ENCODE measurements at regions of chr10 and their contacts with region 1.

Region 1: GRCh38 chr10:8346861-8347260 is 292.4 kb downstream of the GATA3 start:
- DNase-seq: no peak
- ATAC-seq: no peak
- H3K4me3 ChIP-seq: no peak overlapping the region
- H3K4me3 Mint-ChIP-seq: no peak overlapping the region
- H3K27ac ChIP-seq: no peak overlapping the region
- H3K27ac Mint-ChIP-seq: no peak overlapping the region
- H3K4me1 ChIP-seq: no peaks in the 10 kb centered on the region
- H3K4me1 Mint-ChIP-seq: no peaks in the 10 kb centered on the region
- H3K27me3 ChIP-seq: no peaks in the 10 kb centered on the region
- H3K27me3 Mint-ChIP-seq: no peaks in the 10 kb centered on the region

Region 2: DNA sequence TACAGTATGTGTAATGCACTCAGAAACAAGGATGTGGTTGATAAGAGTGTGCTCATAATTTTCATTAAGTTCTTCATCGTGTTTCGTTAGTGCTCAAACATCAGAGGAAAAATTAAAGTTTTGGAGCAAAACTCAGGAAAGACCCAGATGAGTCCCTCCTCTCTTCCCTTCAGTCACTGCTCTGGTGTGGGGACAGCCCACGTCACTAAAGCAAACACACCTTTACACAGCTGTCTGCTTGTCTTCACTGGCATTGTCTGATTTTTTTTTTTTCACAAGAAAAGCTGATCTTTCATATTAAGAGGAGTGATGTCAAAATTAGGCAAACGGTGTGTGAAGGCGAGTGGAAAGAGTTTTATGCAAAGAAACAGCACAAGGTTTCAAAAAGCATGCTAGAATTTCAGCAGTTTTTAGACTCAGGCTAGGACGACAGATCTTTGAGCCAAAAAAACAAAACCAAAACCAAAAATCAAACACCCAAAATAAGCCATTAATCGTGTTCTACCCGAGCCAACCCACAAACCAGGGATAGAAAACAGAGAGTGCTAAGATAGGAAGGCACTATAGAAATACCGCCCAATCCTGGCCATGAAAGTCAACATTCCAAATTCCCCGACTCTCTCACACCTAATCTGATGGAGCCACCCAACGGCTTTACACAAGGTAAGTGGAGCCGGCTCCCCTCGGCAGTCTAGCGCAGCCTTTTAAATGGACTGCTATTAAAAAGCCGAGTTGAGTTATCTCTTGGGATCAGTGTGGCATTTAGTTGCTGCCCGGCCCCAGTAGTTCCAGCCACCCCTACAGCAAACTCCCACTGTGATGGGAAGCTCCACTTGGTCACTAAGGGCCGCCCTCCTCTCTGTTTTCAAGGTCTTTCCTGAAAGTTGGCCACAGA is 320.3 kb before region 1 on chr10:
- CTCF ChIA-PET with region 1: no interaction called
- POLR2A ChIA-PET with region 1: interaction called in 1 of 2 experiments, 17 read pairs
- DNase-seq: peak in 1 of 35 experiments; percentile 11
- ATAC-seq: peak in 1 of 4 experiments; percentile 56
- H3K4me3 ChIP-seq: peak overlapping the region in 1 of 2 donors; percentile 25
- H3K4me3 Mint-ChIP-seq: peak overlapping the region; percentile 64 to 82 (median 69)
- H3K27ac ChIP-seq: no peak overlapping the region
- H3K27ac Mint-ChIP-seq: no peak overlapping the region
- H3K4me1 ChIP-seq: peaks cover 0 to 2% of the 10 kb centered on the region in 2 experiments
- H3K4me1 Mint-ChIP-seq: peaks cover 4 to 6% (median 5%) of the 10 kb centered on the region in 3 donors
- H3K27me3 ChIP-seq: peaks cover 3 to 20% of the 10 kb centered on the region in 2 experiments
- H3K27me3 Mint-ChIP-seq: peaks cover 19 to 31% of the 10 kb centered on the region in 2 donors

Measured in T-cell (primary cell).